AG04449 (cell line): ENCODE measurements at regions of chr4 and their contacts with region 1.

Region 1: DNA sequence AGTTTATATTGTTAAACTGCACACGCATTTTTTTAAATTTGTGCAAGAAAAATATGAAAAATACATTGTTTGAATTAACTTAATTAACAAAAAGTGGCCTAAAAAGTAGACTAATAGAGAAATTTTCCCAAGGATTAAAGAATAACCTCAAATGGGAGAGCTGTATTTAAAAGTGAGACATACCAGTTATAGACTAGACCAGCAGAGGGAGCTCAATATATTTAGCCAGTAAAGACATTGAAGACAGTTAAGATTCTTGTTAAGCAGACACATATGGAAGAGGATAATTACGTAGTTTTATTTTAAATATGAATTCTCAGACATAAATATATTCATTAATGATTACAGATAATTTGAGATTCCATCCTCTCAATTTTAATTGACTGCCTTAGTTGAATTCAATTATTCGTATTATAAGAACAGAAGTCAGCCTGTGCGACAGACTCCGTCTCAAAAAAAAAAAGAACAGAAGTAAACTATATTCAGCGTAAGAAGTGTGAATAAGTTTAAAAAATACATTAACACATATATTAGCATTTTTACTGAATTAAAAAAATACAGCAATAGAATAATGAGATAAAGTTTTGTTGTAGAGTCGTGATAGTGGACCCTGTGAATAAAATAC is 64.8 kb downstream of the GLRA3 start:
- DNase-seq: peak; percentile 4
- H3K4me3 ChIP-seq: no peak overlapping the region
- CTCF ChIP-seq: peak; percentile 19

Region 2: DNA sequence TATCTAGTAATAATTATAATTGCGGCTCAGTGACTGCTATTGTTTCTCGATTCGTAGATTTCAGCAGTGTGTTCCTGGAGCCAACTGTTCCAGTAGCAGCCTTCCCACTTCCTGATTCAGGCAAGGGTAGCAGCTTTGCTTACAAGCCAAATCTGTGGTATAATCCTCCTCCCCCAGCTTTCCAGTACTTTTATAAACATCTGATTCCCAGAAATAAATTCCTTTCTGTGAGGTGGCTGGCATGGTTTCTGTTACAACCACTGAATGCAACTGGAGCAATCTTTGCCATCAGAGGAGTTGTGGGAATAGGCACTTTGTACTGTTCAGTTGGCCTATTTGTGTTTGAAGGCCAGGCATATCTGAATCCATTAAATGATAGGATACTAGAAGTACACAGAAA is 15.1 kb before region 1 on chr4:
- CTCF ChIA-PET with region 1: interaction called, 10 read pairs
- POLR2A ChIA-PET with region 1: no interaction called
- DNase-seq: no peak
- H3K4me3 ChIP-seq: no peak overlapping the region
- CTCF ChIP-seq: no peak

Region 3: GRCh38 chr4:175536852-175537453 is 772.7 kb after region 1 on chr4:
- CTCF ChIA-PET with region 1: interaction called, 13 read pairs
- POLR2A ChIA-PET with region 1: no interaction called
- DNase-seq: no peak
- H3K4me3 ChIP-seq: no peak overlapping the region
- CTCF ChIP-seq: no peak